ENCODE measurements at regions of chr4 and their contacts with region 1.

Region 1: GRCh38 chr4:128191115-128191781 is 96.4 kb downstream of the PGRMC2 start:
- DNase-seq: peak; percentile 54
- ATAC-seq: peak; percentile 100
- H3K4me3 ChIP-seq: no peak overlapping the region
- H3K27ac ChIP-seq: no peak overlapping the region
- H3K4me1 ChIP-seq: peaks cover 2% of the 10 kb centered on the region; the same call in 1 of the 2 replicates
- H3K27me3 ChIP-seq: no peaks in the 10 kb centered on the region
- CTCF ChIP-seq: peak; percentile 79 to 97 (median 91); a peak in 5 of 6 replicates
- EP300 ChIP-seq: no peak
- POLR2A ChIP-seq: no peak
- RAD21 ChIP-seq: peak; percentile 94

Region 2: DNA sequence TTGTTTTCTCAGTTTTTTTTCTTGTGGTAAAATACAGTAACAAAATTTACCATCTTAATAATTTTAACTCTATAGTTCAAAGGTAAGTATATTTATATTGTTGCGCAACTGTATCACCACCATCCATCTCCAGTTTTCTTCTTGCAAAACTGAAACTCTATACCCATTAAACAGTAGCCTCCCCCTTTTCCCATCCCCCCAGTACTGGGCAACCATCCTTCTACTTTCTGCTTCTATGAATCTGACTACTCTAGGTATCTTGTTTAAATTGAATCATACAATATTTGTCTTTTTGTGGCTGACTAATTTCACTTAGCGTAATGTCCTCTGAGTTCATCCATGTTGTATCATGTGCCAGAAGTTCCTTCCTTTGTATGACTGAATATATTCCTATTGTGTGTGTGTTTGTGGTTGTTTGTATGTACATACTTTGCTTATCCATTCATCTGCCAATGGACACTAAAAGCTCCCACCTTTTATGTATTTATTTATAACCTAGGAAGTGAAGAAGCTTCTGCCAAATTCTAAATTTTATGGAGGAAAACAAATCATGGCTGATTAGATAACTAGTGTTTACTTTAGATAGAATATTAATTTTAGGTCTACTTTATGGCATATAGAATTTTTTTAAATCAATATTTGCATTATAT is 216.0 kb before region 1 on chr4:
- CTCF ChIA-PET with region 1: no interaction called
- POLR2A ChIA-PET with region 1: interaction called, 10 read pairs
- RAD21 ChIA-PET with region 1: no interaction called
- SMC1A ChIA-PET with region 1: no interaction called
- in situ Hi-C with region 1: no loop called
- intact Hi-C with region 1: no loop called
- DNase-seq: no peak
- ATAC-seq: no peak
- H3K4me3 ChIP-seq: no peak overlapping the region
- H3K27ac ChIP-seq: no peak overlapping the region
- H3K4me1 ChIP-seq: no peaks in the 10 kb centered on the region
- H3K27me3 ChIP-seq: no peaks in the 10 kb centered on the region
- CTCF ChIP-seq: no peak
- EP300 ChIP-seq: no peak
- POLR2A ChIP-seq: no peak
- RAD21 ChIP-seq: no peak

Region 3: GRCh38 chr4:128220286-128221235 is 29.3 kb after region 1 on chr4:
- CTCF ChIA-PET with region 1: interaction called, 14 read pairs
- POLR2A ChIA-PET with region 1: no interaction called
- RAD21 ChIA-PET with region 1: interaction called, 3 read pairs
- SMC1A ChIA-PET with region 1: interaction called, 8 read pairs
- in situ Hi-C with region 1: no loop called
- intact Hi-C with region 1: no loop called
- DNase-seq: no peak
- ATAC-seq: peak; percentile 72
- H3K4me3 ChIP-seq: no peak overlapping the region
- H3K27ac ChIP-seq: no peak overlapping the region
- H3K4me1 ChIP-seq: no peaks in the 10 kb centered on the region
- H3K27me3 ChIP-seq: no peaks in the 10 kb centered on the region
- CTCF ChIP-seq: peak in 2 of 3 experiments; percentile 10 to 43; a peak in 2 of 6 replicates
- EP300 ChIP-seq: no peak
- POLR2A ChIP-seq: no peak
- RAD21 ChIP-seq: peak; percentile 37; the same call in 1 of the 2 replicates

Region 4: GRCh38 chr4:128298852-128299251 is 107.6 kb after region 1 on chr4:
- CTCF ChIA-PET with region 1: no interaction called
- POLR2A ChIA-PET with region 1: no interaction called
- RAD21 ChIA-PET with region 1: no interaction called
- SMC1A ChIA-PET with region 1: no interaction called
- in situ Hi-C with region 1: no loop called
- intact Hi-C with region 1: no loop called
- DNase-seq: no peak
- ATAC-seq: peak; percentile 88
- H3K4me3 ChIP-seq: no peak overlapping the region
- H3K27ac ChIP-seq: no peak overlapping the region
- H3K4me1 ChIP-seq: no peaks in the 10 kb centered on the region
- H3K27me3 ChIP-seq: no peaks in the 10 kb centered on the region
- CTCF ChIP-seq: peak in 1 of 3 experiments; percentile 22; a peak in 1 of 6 replicates
- EP300 ChIP-seq: no peak
- POLR2A ChIP-seq: no peak
- RAD21 ChIP-seq: no peak

Region 5: DNA sequence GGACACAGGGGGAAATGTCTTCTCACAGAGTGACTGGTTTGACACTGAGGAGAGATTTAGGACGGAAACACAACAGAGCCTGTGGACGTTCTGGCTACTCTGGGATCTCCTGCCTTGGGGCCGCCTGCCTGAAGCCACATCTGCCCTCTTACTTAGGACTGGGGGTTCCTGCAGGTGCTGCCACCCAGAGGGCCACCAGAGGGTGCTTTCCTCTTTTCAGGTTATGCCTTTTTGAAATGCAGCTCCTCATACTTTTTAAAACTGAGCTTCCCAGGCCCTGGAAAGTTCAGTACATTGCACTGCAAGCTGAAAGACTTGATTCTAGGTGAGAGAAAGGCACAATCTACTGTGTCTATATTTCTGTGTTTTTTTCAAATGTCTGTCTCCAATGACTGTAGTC is 188.6 kb after region 1 on chr4:
- CTCF ChIA-PET with region 1: interaction called, 7 read pairs
- POLR2A ChIA-PET with region 1: no interaction called
- RAD21 ChIA-PET with region 1: interaction called, 3 read pairs
- SMC1A ChIA-PET with region 1: interaction called, 4 read pairs
- in situ Hi-C with region 1: no loop called
- intact Hi-C with region 1: loop called (anchors 5 kb)
- DNase-seq: no peak
- ATAC-seq: peak; percentile 79
- H3K4me3 ChIP-seq: no peak overlapping the region
- H3K27ac ChIP-seq: no peak overlapping the region
- H3K4me1 ChIP-seq: no peaks in the 10 kb centered on the region
- H3K27me3 ChIP-seq: no peaks in the 10 kb centered on the region
- CTCF ChIP-seq: peak; percentile 47 to 51 (median 48)
- EP300 ChIP-seq: no peak
- POLR2A ChIP-seq: no peak
- RAD21 ChIP-seq: peak; percentile 42; the same call in 1 of the 2 replicates

Region 6: DNA sequence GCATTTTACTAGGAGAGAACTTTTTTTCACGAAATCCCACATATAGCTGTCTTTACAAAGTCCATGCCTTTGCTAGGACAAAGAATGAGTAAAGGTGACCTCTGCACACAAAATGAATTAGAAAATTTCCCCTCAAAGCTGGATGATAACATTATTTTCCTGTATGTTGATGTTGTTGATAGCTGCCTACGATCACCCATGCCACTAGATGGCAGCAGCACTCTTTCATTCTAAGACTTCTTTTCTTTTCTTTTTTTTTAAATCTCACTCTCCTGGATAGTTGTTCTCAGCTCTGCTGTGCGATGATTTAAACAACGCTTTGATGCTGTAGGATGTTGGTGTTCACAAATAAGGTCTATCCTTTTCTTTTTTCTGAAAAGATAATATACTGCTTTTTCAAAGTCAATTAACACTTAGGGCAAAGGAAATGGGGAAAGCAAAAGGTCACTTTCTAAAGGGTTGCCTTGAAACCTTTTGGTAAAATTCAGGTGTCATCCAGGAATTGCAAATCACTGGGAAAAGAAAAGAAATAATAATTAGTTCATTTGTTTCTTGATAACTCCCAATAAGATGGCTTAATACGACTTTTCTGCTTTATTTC is 1171.5 kb after region 1 on chr4:
- CTCF ChIA-PET with region 1: no interaction called
- POLR2A ChIA-PET with region 1: no interaction called
- RAD21 ChIA-PET with region 1: no interaction called
- SMC1A ChIA-PET with region 1: no interaction called
- in situ Hi-C with region 1: no loop called
- intact Hi-C with region 1: loop called (anchors 10 kb)
- DNase-seq: peak; percentile 13
- ATAC-seq: peak; percentile 83
- H3K4me3 ChIP-seq: no peak overlapping the region
- H3K27ac ChIP-seq: no peak overlapping the region
- H3K4me1 ChIP-seq: no peaks in the 10 kb centered on the region
- H3K27me3 ChIP-seq: no peaks in the 10 kb centered on the region; a peak in 1 of 4 replicates
- CTCF ChIP-seq: peak; percentile 69 to 83 (median 81)
- EP300 ChIP-seq: no peak
- POLR2A ChIP-seq: no peak
- RAD21 ChIP-seq: peak; percentile 85

Region 7: GRCh38 chr4:129641179-129641578 is 1449.9 kb after region 1 on chr4:
- CTCF ChIA-PET with region 1: no interaction called
- POLR2A ChIA-PET with region 1: no interaction called
- RAD21 ChIA-PET with region 1: no interaction called
- SMC1A ChIA-PET with region 1: interaction called, 3 read pairs
- in situ Hi-C with region 1: loop called (anchors 25 kb)
- intact Hi-C with region 1: loop called (anchors 5 kb)
- DNase-seq: peak; percentile 8
- ATAC-seq: peak; percentile 82
- H3K4me3 ChIP-seq: no peak overlapping the region
- H3K27ac ChIP-seq: no peak overlapping the region
- H3K4me1 ChIP-seq: no peaks in the 10 kb centered on the region
- H3K27me3 ChIP-seq: no peaks in the 10 kb centered on the region
- CTCF ChIP-seq: peak; percentile 69 to 80 (median 74)
- EP300 ChIP-seq: no peak
- POLR2A ChIP-seq: no peak
- RAD21 ChIP-seq: peak; percentile 66